Caco-2 (cell line): ENCODE measurements at regions of chr14 and their contacts with region 1.

Region 1: DNA sequence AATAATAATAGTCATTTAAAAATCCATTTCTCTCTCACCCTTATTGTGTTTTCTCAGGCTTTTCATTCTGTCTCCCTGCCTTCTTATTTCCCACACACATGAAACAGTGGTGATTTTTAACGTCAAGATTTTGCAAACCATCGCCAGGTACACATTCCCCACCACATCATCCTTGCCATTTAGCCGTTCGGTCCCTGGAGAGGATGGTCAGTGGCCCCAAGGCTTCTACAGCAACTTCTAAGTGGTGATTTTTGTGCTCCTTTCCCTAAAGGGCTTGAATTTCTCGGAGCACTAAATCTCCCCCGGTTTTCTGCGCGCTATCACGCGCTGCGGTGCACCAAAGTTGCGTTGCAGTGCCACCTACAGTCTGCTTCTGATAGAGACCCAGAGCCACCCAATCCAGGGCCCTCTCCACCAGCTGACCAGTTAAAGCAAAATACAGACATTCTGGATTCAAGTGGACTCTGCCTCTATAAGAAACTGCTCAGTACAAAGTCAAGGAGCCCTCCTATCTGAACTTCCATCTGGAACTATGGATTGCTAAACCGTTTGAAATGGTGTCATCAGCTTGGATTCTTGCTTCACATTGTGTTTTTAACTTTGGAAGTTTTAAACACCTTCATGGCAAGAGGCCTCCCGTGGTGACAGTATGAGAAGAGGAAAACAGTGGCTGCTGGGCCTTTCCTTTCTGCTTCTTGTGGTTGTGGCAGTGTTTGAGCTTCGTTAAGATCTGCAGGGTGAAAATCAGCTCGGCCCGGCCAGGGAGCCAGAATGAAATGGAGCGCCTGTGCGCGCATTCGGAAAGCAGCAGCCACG is 234.0 kb downstream of the SPTSSA start:
- DNase-seq: peak; percentile 76 to 82
- H3K4me3 ChIP-seq: no peak overlapping the region
- H3K4me3 Mint-ChIP-seq: peak overlapping the region; percentile 61
- H3K27ac Mint-ChIP-seq: peak overlapping the region; percentile 80
- H3K4me1 ChIP-seq: peaks cover 51% of the 10 kb centered on the region
- H3K4me1 Mint-ChIP-seq: peaks cover 54% of the 10 kb centered on the region
- H3K27me3 ChIP-seq: no peaks in the 10 kb centered on the region
- H3K27me3 Mint-ChIP-seq: no peaks in the 10 kb centered on the region
- CTCF ChIP-seq: peak; percentile 70 to 92

Region 2: DNA sequence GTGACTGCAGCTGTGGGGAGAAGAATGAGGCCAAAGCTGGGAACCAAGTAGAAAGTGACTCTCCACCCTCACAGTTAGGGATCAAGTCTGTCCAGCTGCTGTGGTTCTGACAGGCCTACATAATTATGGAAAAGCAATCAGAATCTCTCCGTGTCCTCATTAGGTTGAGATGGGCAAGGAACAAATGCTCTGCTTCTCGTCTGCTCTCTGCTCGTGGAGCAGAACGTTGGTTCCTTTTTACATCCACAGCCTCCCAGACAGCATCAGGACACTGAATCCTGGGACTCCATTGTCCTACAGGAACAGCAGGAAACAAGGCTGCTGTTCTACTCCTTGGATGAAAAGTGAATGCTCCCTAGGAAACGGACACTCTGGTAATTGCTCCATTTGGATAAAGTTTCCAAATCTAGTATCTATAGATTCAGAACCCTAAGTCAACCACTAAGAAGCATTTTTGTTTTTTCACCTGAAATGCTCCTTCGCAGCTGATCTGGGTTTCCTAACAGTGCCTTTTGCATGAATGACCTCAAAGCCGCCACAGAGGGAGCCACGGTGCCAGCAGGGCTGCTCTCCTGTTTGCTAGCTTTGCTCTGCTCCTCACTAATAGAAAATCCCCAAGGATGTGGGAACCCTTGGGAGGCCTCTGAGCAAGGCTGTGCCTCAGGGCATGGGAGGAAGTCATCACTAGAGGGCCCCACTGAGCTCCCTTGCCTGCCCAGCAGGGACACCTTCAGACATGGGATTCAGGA is 379.2 kb before region 1 on chr14:
- CTCF ChIA-PET with region 1: interaction called, 7 read pairs
- POLR2A ChIA-PET with region 1: no interaction called
- intact Hi-C with region 1: loop called (anchors 1 kb)
- DNase-seq: peak; percentile 83 to 84
- H3K4me3 ChIP-seq: no peak overlapping the region
- H3K4me3 Mint-ChIP-seq: no peak overlapping the region
- H3K27ac Mint-ChIP-seq: no peak overlapping the region
- H3K4me1 ChIP-seq: no peaks in the 10 kb centered on the region
- H3K4me1 Mint-ChIP-seq: peaks cover 8% of the 10 kb centered on the region
- H3K27me3 ChIP-seq: no peaks in the 10 kb centered on the region
- H3K27me3 Mint-ChIP-seq: no peaks in the 10 kb centered on the region
- CTCF ChIP-seq: peak; percentile 65 to 84

Region 3: GRCh38 chr14:34049790-34050189 is 178.3 kb before region 1 on chr14:
- CTCF ChIA-PET with region 1: interaction called, 10 read pairs
- POLR2A ChIA-PET with region 1: no interaction called
- intact Hi-C with region 1: no loop called
- DNase-seq: no peak
- H3K4me3 ChIP-seq: no peak overlapping the region
- H3K4me3 Mint-ChIP-seq: no peak overlapping the region
- H3K27ac Mint-ChIP-seq: peak overlapping the region; percentile 57
- H3K4me1 ChIP-seq: peaks cover 45% of the 10 kb centered on the region
- H3K4me1 Mint-ChIP-seq: peaks cover 57% of the 10 kb centered on the region
- H3K27me3 ChIP-seq: no peaks in the 10 kb centered on the region
- H3K27me3 Mint-ChIP-seq: no peaks in the 10 kb centered on the region
- CTCF ChIP-seq: no peak

Region 4: DNA sequence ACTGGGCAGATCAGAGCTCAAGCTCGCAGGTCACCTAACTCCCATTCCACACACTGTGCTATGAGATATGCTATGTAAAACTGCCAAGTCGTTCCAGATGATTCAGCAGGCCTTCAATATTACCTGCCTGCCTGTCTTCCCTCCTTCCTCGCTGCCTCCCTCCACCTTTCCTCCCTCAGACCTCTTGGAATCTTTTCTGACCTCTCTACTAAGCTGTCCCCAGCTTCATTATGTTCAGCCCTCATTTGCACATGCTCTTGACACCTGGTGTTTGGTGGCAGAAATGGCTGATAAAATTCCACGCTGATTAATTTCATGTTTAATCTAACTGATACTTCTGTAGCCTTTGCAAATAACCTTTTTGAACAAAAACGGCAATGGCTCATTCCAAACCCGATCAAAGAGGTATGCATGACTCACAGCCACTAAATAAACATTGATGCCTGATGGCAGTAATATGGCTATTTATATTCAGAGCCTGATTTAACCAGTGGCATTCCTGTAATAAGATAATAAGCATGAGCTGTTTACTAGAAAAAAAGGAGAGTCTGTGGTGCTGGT is 146.4 kb before region 1 on chr14:
- CTCF ChIA-PET with region 1: no interaction called
- POLR2A ChIA-PET with region 1: no interaction called
- intact Hi-C with region 1: no loop called
- DNase-seq: peak; percentile 29 to 54
- H3K4me3 ChIP-seq: no peak overlapping the region
- H3K4me3 Mint-ChIP-seq: peak overlapping the region; percentile 27
- H3K27ac Mint-ChIP-seq: peak overlapping the region; percentile 73
- H3K4me1 ChIP-seq: peaks cover 49% of the 10 kb centered on the region
- H3K4me1 Mint-ChIP-seq: peaks cover 29% of the 10 kb centered on the region
- H3K27me3 ChIP-seq: no peaks in the 10 kb centered on the region
- H3K27me3 Mint-ChIP-seq: no peaks in the 10 kb centered on the region
- CTCF ChIP-seq: no peak

Region 5: GRCh38 chr14:34136996-34137745 is 90.9 kb before region 1 on chr14:
- CTCF ChIA-PET with region 1: no interaction called
- POLR2A ChIA-PET with region 1: no interaction called
- intact Hi-C with region 1: loop called (anchors 1 kb)
- DNase-seq: no peak
- H3K4me3 ChIP-seq: no peak overlapping the region
- H3K4me3 Mint-ChIP-seq: no peak overlapping the region
- H3K27ac Mint-ChIP-seq: no peak overlapping the region
- H3K4me1 ChIP-seq: peaks cover 11% of the 10 kb centered on the region
- H3K4me1 Mint-ChIP-seq: peaks cover 6% of the 10 kb centered on the region
- H3K27me3 ChIP-seq: no peaks in the 10 kb centered on the region
- H3K27me3 Mint-ChIP-seq: no peaks in the 10 kb centered on the region
- CTCF ChIP-seq: no peak

Region 6: GRCh38 chr14:34496679-34497513 is 268.9 kb after region 1 on chr14:
- CTCF ChIA-PET with region 1: no interaction called
- POLR2A ChIA-PET with region 1: no interaction called
- intact Hi-C with region 1: no loop called
- DNase-seq: peak; percentile 72 to 81
- H3K4me3 ChIP-seq: no peak overlapping the region
- H3K4me3 Mint-ChIP-seq: peak overlapping the region; percentile 61
- H3K27ac Mint-ChIP-seq: peak overlapping the region; percentile 91
- H3K4me1 ChIP-seq: peaks cover 23% of the 10 kb centered on the region
- H3K4me1 Mint-ChIP-seq: no peaks in the 10 kb centered on the region
- H3K27me3 ChIP-seq: no peaks in the 10 kb centered on the region
- H3K27me3 Mint-ChIP-seq: no peaks in the 10 kb centered on the region
- CTCF ChIP-seq: peak; percentile 23 to 46